Activated CD4-positive, alpha-beta memory T cell treated with anti-CD3 and anti-CD28 coated beads for 36 hours (primary cell): ENCODE measurements at regions of chr10 and their contacts with region 1.

Region 1: GRCh38 chr10:23362879-23363792 is 18.5 kb upstream of the C10orf67 start:
- DNase-seq: peak; percentile 68
- H3K4me3 Mint-ChIP-seq: peak overlapping the region; percentile 63
- H3K27ac Mint-ChIP-seq: peak overlapping the region; percentile 89
- H3K4me1 Mint-ChIP-seq: peaks cover 61% of the 10 kb centered on the region
- H3K27me3 Mint-ChIP-seq: peaks cover 3% of the 10 kb centered on the region

Region 2: GRCh38 chr10:23280420-23281043 is 82.6 kb before region 1 on chr10:
- CTCF ChIA-PET with region 1: no interaction called
- POLR2A ChIA-PET with region 1: no interaction called
- intact Hi-C with region 1: no loop called
- DNase-seq: no peak
- H3K4me3 Mint-ChIP-seq: no peak overlapping the region
- H3K27ac Mint-ChIP-seq: no peak overlapping the region
- H3K4me1 Mint-ChIP-seq: no peaks in the 10 kb centered on the region
- H3K27me3 Mint-ChIP-seq: peaks cover 20% of the 10 kb centered on the region

Region 3: GRCh38 chr10:23338178-23338828 is 24.8 kb before region 1 on chr10:
- CTCF ChIA-PET with region 1: interaction called, 4 read pairs
- POLR2A ChIA-PET with region 1: interaction called, 8 read pairs
- intact Hi-C with region 1: loop called (anchors 1 kb)
- DNase-seq: no peak
- H3K4me3 Mint-ChIP-seq: no peak overlapping the region
- H3K27ac Mint-ChIP-seq: no peak overlapping the region
- H3K4me1 Mint-ChIP-seq: peaks cover 73% of the 10 kb centered on the region
- H3K27me3 Mint-ChIP-seq: no peaks in the 10 kb centered on the region